ENCODE measurements at regions of chr6 and their contacts with region 1.

Region 1: DNA sequence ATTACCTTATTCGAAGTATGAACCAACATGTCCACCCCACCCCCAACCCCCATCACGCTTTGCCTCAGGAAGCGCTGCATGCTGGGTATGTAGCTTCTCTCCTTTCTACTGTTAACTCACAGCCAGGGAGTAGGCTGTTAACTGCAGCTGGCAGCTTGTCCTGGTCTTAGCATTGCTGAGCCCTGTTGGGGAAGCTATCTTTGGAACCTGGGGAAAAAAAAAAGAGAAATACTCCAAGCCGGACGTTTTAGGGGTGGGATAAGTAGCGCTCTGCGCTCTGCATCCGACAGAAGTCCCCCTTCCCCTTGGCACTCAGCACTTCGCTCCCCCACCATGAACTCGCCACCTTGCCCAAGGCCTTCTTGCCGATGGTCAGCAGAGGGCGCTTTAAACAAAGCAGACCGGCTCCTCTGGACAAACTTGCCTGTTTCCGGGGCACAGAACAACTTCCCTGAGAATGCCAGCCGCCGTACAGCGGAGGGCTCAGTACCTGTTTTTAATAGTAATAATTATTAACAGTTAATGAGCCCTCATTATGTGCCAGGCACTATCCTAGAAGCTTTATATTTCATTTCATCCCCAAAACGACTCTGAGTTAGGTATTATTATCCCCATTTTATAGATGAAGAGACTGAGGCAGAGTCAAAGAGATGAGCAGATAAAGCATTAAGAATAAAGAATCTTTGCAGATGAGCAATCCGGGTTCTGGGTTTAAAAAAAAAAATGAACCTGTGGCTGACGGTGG is 35.2 kb upstream of the MDFI start:
- DNase-seq: peak; percentile 86
- ATAC-seq: peak; percentile 93
- H3K4me3 Mint-ChIP-seq: no peak overlapping the region
- H3K27ac Mint-ChIP-seq: no peak overlapping the region
- H3K4me1 Mint-ChIP-seq: peaks cover 3% of the 10 kb centered on the region
- H3K27me3 Mint-ChIP-seq: no peaks in the 10 kb centered on the region

Region 2: DNA sequence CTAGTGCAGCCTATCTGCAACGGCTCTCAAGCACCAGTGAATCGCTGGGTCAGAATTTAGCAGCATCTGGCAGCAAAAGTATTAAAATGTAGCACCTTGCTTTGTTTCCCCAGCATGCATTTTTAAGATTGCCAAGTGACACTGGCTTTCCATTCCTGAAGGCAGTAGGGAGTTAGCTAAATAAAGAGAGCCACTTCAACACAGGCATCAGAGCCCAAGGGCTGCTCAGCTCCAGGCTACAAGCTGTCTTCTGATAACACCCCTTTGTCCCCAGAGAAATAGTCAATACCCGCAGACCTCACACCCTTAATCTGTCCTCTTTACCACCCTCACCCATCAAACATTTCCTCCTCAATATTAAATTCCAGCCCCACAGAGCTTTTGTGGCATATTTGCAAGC is 15.6 kb after region 1 on chr6:
- CTCF ChIA-PET with region 1: interaction called, 12 read pairs
- POLR2A ChIA-PET with region 1: no interaction called
- intact Hi-C with region 1: no loop called
- DNase-seq: no peak
- ATAC-seq: no peak
- H3K4me3 Mint-ChIP-seq: no peak overlapping the region
- H3K27ac Mint-ChIP-seq: no peak overlapping the region
- H3K4me1 Mint-ChIP-seq: no peaks in the 10 kb centered on the region
- H3K27me3 Mint-ChIP-seq: peaks cover 6% of the 10 kb centered on the region

Region 3: GRCh38 chr6:41683510-41684310 is 80.7 kb after region 1 on chr6:
- CTCF ChIA-PET with region 1: interaction called, 48 read pairs
- POLR2A ChIA-PET with region 1: no interaction called
- intact Hi-C with region 1: loop called (anchors 1 kb)
- DNase-seq: peak; percentile 90
- ATAC-seq: peak; percentile 92
- H3K4me3 Mint-ChIP-seq: peak overlapping the region; percentile 69
- H3K27ac Mint-ChIP-seq: peak overlapping the region; percentile 77
- H3K4me1 Mint-ChIP-seq: peaks cover 8% of the 10 kb centered on the region
- H3K27me3 Mint-ChIP-seq: no peaks in the 10 kb centered on the region

Measured in activated CD4-positive, alpha-beta T cell treated with anti-CD3 and anti-CD28 coated beads for 36 hours (primary cell).